MCF 10A (cell line): ENCODE measurements at regions of chr5 and their contacts with region 1.

Region 1: DNA sequence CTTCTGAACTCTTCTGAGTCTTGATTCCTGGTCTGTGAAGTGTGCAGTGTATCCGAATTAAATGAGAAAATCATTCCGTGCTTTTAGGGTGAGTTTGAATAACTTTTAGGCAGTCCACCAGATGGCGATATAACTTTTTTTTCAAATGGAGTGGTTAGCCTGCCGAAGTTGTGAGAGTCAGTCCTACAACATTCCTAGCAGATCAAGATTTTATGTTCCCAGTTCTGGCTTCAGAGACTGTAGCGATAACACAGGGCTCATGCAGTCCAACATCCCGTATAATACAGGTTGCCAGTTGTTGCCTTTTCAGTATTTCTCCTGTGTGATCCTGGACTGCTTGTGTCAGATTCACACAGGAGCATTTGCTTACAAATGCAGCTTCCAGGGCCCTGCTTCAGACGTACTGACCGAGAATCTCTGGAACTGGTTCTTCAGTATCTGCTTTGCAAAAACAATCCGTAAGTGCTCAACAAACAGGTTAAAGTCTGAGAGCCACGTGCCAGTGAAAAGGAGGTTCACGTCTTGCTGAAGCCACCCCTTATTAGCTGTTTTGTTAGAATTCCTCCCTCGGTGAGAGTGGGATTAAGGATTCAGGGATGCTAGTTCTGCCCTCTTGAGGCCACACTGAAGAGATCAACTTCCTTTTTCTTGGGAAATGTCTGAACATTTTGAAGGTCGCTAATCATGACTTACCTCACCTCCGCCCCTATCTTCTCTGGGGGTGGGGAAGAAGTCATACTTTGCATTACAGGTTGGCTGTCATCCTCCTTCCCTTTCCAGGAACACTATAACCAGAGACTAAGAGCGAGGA is 22.8 kb downstream of the SMIM3 start:
- DNase-seq: peak; percentile 87
- H3K4me3 Mint-ChIP-seq: peak overlapping the region; percentile 64
- H3K27ac Mint-ChIP-seq: peak overlapping the region; percentile 36
- H3K4me1 Mint-ChIP-seq: peaks cover 14% of the 10 kb centered on the region
- H3K27me3 Mint-ChIP-seq: no peaks in the 10 kb centered on the region
- CTCF ChIP-seq: peak; percentile 68

Region 2: GRCh38 chr5:150758531-150759333 is 42.6 kb before region 1 on chr5 and contains the start of gene DCTN4:
- CTCF ChIA-PET with region 1: interaction called, 44 read pairs
- POLR2A ChIA-PET with region 1: interaction called, 12 read pairs
- intact Hi-C with region 1: loop called (anchors 1 kb)
- DNase-seq: peak; percentile 100
- H3K4me3 Mint-ChIP-seq: no peak within 1 kb of the TSS
- H3K27ac Mint-ChIP-seq: no peak within 1 kb of the TSS
- H3K4me1 Mint-ChIP-seq: peaks cover 34% of the 10 kb centered on the region
- H3K27me3 Mint-ChIP-seq: no peaks in the 10 kb centered on the region
- CTCF ChIP-seq: no peak
- total RNA-seq, gene DCTN4: 122 and 143 TPM in 2 replicates

Region 3: GRCh38 chr5:150789943-150790611 is 11.2 kb before region 1 on chr5:
- CTCF ChIA-PET with region 1: interaction called, 50 read pairs
- POLR2A ChIA-PET with region 1: interaction called, 8 read pairs
- intact Hi-C with region 1: no loop called
- DNase-seq: peak; percentile 100
- H3K4me3 Mint-ChIP-seq: peak overlapping the region; percentile 65
- H3K27ac Mint-ChIP-seq: peak overlapping the region; percentile 95
- H3K4me1 Mint-ChIP-seq: peaks cover 48% of the 10 kb centered on the region
- H3K27me3 Mint-ChIP-seq: no peaks in the 10 kb centered on the region
- CTCF ChIP-seq: no peak

Region 4: DNA sequence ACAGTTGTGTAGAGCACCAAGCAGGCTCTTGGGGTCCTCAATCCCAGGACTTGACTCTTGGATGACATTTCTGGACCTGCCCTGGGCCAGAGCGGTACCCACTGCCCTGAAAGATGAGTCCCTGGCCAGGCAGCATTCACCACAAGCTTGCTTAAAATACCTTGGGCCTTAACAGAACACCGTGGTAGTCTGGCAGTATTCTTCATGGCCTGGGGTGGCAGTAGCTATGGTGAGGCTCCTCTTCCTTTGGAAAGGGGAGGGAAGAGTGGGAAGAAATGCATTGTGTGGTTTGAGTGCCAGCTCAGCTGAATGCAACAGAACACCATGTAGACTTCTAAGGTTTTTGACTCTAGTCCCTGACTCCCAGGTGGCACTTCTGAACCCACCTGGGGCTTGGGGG is 15.6 kb after region 1 on chr5:
- CTCF ChIA-PET with region 1: interaction called, 31 read pairs
- POLR2A ChIA-PET with region 1: interaction called, 4 read pairs
- intact Hi-C with region 1: no loop called
- DNase-seq: no peak
- H3K4me3 Mint-ChIP-seq: no peak overlapping the region
- H3K27ac Mint-ChIP-seq: no peak overlapping the region
- H3K4me1 Mint-ChIP-seq: no peaks in the 10 kb centered on the region
- H3K27me3 Mint-ChIP-seq: no peaks in the 10 kb centered on the region
- CTCF ChIP-seq: no peak

Region 5: DNA sequence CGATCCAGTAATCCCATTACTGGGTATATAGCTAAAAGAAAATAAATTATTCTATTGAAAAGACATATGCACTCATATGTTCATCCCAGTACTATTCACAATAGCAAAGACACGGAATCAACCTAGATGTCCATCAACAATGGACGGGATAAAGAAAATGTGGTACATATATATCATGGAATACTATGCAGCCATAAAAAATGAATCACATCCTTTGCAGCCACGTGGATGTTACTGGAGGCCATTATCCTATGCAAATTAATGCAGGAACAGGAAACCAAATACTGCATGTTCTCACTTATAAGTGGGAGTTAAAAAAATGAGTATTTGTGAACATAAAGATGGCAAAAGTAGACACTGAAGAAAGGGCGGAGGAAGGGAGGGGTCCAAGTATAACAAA is 28.4 kb after region 1 on chr5:
- CTCF ChIA-PET with region 1: interaction called, 16 read pairs
- POLR2A ChIA-PET with region 1: no interaction called
- intact Hi-C with region 1: no loop called
- DNase-seq: no peak
- H3K4me3 Mint-ChIP-seq: no peak overlapping the region
- H3K27ac Mint-ChIP-seq: no peak overlapping the region
- H3K4me1 Mint-ChIP-seq: no peaks in the 10 kb centered on the region
- H3K27me3 Mint-ChIP-seq: no peaks in the 10 kb centered on the region
- CTCF ChIP-seq: no peak

Region 6: GRCh38 chr5:150846654-150847333 is 45.5 kb after region 1 on chr5:
- CTCF ChIA-PET with region 1: interaction called, 99 read pairs
- POLR2A ChIA-PET with region 1: interaction called, 17 read pairs
- intact Hi-C with region 1: loop called (anchors 1 kb)
- DNase-seq: peak; percentile 92
- H3K4me3 Mint-ChIP-seq: no peak overlapping the region
- H3K27ac Mint-ChIP-seq: no peak overlapping the region
- H3K4me1 Mint-ChIP-seq: no peaks in the 10 kb centered on the region
- H3K27me3 Mint-ChIP-seq: no peaks in the 10 kb centered on the region
- CTCF ChIP-seq: peak; percentile 85

Region 7: DNA sequence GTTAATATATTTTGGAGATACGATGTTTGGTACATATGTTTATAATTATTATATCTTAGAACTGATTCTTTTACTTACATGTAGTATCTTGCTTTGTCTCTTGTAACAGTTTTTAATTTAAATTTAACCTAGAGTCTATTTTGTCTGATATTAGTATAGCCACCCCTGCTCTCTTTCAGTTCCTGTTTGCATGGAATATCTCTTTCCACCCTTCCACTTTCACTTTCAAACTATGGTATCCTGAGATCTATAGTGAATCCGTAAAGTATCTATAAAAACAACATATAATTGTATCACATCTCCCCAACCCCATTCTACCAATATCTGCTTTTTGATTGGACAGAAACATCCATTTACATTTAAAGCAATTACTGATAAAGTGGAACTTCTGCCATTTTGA is 52.2 kb after region 1 on chr5:
- CTCF ChIA-PET with region 1: interaction called, 99 read pairs
- POLR2A ChIA-PET with region 1: interaction called, 17 read pairs
- intact Hi-C with region 1: no loop called
- DNase-seq: no peak
- H3K4me3 Mint-ChIP-seq: no peak overlapping the region
- H3K27ac Mint-ChIP-seq: no peak overlapping the region
- H3K4me1 Mint-ChIP-seq: no peaks in the 10 kb centered on the region
- H3K27me3 Mint-ChIP-seq: no peaks in the 10 kb centered on the region
- CTCF ChIP-seq: no peak